Activated T-helper 2 cell treated with anti-CD3 and anti-CD28 coated beads, Interferon-gamma antibody, Interleukin-2, Interleukin-4, amounts not matched to agents 10 μg/mL and 5 μg/mL and 100 μg/mL, durations not matched to agents 14 hours and 24 hours and 36 hours (primary cell): ENCODE measurements at regions of chr3 and their contacts with region 1.

Region 1: GRCh38 chr3:197959898-197960693 is at the start of gene LMLN:
- DNase-seq: peak; percentile 95
- H3K4me3 Mint-ChIP-seq: peak within 1 kb of the TSS; percentile 88
- H3K27ac Mint-ChIP-seq: peak within 1 kb of the TSS; percentile 92
- H3K4me1 Mint-ChIP-seq: peaks cover 39% of the 10 kb centered on the region
- H3K27me3 Mint-ChIP-seq: peaks cover 2% of the 10 kb centered on the region
- total RNA-seq, gene LMLN: 4.3 and 4.4 TPM in 2 replicates

Region 2: DNA sequence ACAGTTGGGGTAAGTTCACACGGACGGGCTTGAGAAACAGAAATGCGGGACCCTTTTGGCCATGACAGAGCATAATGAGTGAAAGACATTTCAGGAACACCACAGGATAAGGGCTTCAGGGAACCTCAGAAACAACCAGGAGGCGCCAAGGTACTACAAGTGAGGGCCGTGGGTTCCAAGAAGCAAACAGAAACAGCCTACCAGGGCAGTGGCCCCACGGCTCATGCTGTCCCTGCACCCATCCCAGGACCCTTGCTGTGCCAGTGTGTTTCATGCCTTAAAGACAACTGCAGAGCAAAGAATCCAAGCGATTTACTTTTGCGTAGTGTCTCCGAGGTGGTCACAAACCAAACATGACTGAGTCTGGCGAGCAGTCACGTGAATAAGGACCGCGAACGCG is 277.4 kb before region 1 on chr3:
- intact Hi-C with region 1: no loop called
- DNase-seq: no peak
- H3K4me3 Mint-ChIP-seq: no peak overlapping the region
- H3K27ac Mint-ChIP-seq: no peak overlapping the region
- H3K4me1 Mint-ChIP-seq: no peaks in the 10 kb centered on the region
- H3K27me3 Mint-ChIP-seq: no peaks in the 10 kb centered on the region

Region 3: GRCh38 chr3:197949754-197950660 is 10.1 kb before region 1 on chr3 and contains the start of gene RPL35A:
- intact Hi-C with region 1: loop called (anchors 1 kb)
- DNase-seq: peak; percentile 81
- H3K4me3 Mint-ChIP-seq: peak within 1 kb of the TSS; percentile 99
- H3K27ac Mint-ChIP-seq: peak within 1 kb of the TSS; percentile 97
- H3K4me1 Mint-ChIP-seq: peaks cover 34% of the 10 kb centered on the region
- H3K27me3 Mint-ChIP-seq: no peaks in the 10 kb centered on the region
- total RNA-seq, gene RPL35A: 1,338 and 1,363 TPM in 2 replicates

Region 4: DNA sequence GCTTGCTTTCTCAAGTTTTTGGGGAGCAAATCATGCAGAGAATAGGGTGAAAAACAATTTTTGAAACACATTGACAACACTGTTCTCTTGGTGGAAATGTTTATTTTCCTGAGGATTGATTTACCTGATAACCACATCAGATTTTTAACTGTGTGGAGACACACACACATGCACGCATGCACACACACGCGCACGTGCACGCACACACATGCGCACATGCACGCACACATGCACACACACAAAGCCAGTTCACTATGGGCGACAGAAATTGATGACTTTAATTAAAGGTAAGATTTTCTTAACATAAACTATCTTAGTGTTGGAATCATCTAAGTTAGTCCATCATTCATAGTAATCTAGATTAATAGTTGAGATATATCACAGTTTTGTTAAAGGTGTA is 15.2 kb after region 1 on chr3:
- intact Hi-C with region 1: no loop called
- DNase-seq: no peak
- H3K4me3 Mint-ChIP-seq: no peak overlapping the region
- H3K27ac Mint-ChIP-seq: no peak overlapping the region
- H3K4me1 Mint-ChIP-seq: no peaks in the 10 kb centered on the region
- H3K27me3 Mint-ChIP-seq: no peaks in the 10 kb centered on the region

Region 5: DNA sequence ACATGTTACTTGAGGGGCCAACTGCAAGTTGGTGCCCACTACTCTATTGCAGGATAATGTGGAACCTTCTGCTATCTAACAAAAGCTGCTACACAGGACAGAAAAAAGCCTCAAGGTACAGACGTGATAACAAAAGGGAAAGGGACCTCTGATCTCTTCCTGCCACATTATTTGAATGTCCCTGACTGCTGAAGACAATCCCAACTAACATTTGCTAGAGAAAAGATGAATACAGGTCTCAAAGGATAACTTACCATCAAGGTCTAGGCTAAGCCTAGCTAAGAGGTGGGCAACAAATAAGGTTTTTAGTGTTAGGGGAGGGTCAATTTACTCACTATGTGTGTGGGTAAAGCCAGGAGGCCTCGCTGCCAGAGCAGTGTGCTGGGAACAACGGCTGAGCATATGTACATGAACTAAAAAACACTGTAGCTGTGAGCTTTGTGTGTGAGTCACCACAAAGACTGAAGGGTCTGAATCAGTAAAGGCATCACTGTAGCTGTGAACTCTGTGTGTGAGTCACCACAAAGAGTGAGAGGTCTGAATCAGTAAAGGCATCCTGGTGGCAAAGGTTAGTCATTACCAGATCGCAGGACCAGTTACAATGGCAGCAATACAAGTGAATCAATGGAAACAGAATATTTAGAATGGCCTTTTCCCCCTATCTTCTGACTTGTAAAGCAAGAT is 111.6 kb after region 1 on chr3:
- intact Hi-C with region 1: loop called (anchors 1 kb)
- DNase-seq: peak; percentile 48
- H3K4me3 Mint-ChIP-seq: peak overlapping the region; percentile 5
- H3K27ac Mint-ChIP-seq: peak overlapping the region; percentile 84
- H3K4me1 Mint-ChIP-seq: peaks cover 24% of the 10 kb centered on the region
- H3K27me3 Mint-ChIP-seq: peaks cover 2% of the 10 kb centered on the region

Region 6: GRCh38 chr3:198080521-198081280 is 120.6 kb after region 1 on chr3:
- intact Hi-C with region 1: loop called (anchors 2 kb)
- DNase-seq: peak; percentile 79
- H3K4me3 Mint-ChIP-seq: peak overlapping the region; percentile 85
- H3K27ac Mint-ChIP-seq: peak overlapping the region; percentile 83
- H3K4me1 Mint-ChIP-seq: peaks cover 13% of the 10 kb centered on the region
- H3K27me3 Mint-ChIP-seq: peaks cover 37% of the 10 kb centered on the region